Activated T-helper 2 cell treated with anti-CD3 and anti-CD28 coated beads, Interferon-gamma antibody, Interleukin-2, Interleukin-4, amounts not matched to agents 10 μg/mL and 5 μg/mL and 100 μg/mL, durations not matched to agents 14 hours and 24 hours and 36 hours (primary cell): ENCODE measurements at regions of chr15 and their contacts with region 1.

Region 1: DNA sequence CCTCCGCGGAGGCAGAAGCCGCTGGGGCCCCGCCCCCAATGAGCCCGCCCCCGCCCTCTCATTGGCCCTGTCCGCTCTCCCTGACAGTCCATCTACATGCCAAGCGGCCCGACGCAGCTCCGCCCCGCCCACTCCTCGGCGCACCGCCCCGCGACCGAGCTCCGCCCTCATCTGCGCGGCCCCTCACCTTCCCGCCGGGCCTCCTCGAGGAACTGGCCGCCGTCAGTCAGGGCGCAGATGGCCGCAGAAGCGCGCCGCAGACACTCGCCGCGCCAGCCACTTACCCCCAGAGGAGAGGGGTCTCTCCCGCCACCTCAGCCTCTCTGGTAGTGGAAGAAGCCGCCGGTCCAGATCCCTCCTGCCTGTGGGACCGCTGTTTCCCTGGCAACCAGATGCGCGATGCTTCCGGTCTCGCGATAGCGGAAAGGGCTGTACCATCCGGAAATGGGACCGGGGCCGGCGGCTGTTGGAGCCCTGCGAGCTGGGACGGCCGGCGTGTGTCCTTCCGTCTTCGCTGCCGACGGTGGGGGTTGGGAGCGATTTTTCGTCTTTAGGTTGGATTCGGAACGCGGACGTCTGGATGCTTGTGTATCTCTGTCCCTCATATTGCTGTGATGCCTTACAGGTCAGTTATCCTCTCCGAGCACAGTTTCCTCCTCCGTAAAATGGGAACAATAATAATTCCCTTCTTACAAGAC is at the start of gene FSIP1:
- DNase-seq: peak; percentile 95
- H3K4me3 Mint-ChIP-seq: peak within 1 kb of the TSS; percentile 81
- H3K27ac Mint-ChIP-seq: peak within 1 kb of the TSS; percentile 67
- H3K4me1 Mint-ChIP-seq: peaks cover 34% of the 10 kb centered on the region
- H3K27me3 Mint-ChIP-seq: peaks cover 6% of the 10 kb centered on the region
- total RNA-seq, gene FSIP1: 0.14 and 0.16 TPM in 2 replicates

Region 2: GRCh38 chr15:39874890-39875549 is 92.4 kb after region 1 on chr15:
- intact Hi-C with region 1: loop called (anchors 1 kb)
- DNase-seq: no peak
- H3K4me3 Mint-ChIP-seq: no peak overlapping the region
- H3K27ac Mint-ChIP-seq: no peak overlapping the region
- H3K4me1 Mint-ChIP-seq: peaks cover 12% of the 10 kb centered on the region
- H3K27me3 Mint-ChIP-seq: peaks cover 6% of the 10 kb centered on the region

Region 3: DNA sequence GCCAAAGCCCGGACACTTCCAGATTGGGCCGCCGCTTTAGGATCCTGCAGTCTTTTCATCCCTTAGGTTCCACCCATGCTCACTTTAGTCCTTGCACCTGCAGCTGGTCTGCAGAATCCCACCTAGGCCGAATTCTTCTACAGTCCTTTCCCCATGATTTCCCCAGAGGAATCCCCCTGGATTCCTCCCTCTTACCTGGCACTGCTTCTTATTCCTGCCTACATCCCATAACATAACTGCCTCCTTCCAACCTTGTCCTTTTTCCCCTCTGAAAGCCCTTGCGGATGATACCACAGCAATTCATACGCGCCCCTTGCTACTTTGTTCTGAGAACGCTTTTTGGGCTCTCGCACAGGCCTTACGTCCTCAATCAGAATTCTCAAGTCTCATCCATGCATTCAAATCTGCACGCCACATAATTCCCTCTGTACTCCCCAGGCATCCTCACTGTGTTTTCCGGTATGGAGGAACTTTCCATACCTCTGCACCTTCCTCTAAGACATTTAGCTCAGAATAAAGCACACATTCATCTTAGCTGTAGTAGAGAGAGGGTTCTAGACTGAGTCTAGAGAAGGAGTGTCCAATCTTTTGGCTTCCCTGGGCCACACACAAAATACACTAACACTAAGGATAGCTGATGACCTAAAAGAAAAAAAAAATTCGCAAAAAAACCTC is 151.9 kb after region 1 on chr15:
- intact Hi-C with region 1: loop called (anchors 5 kb)
- DNase-seq: no peak
- H3K4me3 Mint-ChIP-seq: peak overlapping the region; percentile 90
- H3K27ac Mint-ChIP-seq: peak overlapping the region; percentile 67
- H3K4me1 Mint-ChIP-seq: peaks cover 36% of the 10 kb centered on the region
- H3K27me3 Mint-ChIP-seq: peaks cover 1% of the 10 kb centered on the region

Region 4: GRCh38 chr15:39966521-39966920 is 183.9 kb after region 1 on chr15:
- intact Hi-C with region 1: loop called (anchors 5 kb)
- DNase-seq: no peak
- H3K4me3 Mint-ChIP-seq: no peak overlapping the region
- H3K27ac Mint-ChIP-seq: no peak overlapping the region
- H3K4me1 Mint-ChIP-seq: peaks cover 51% of the 10 kb centered on the region
- H3K27me3 Mint-ChIP-seq: no peaks in the 10 kb centered on the region

Region 5: GRCh38 chr15:40038638-40039543 is 256.3 kb after region 1 on chr15 and contains the start of gene SRP14:
- intact Hi-C with region 1: loop called (anchors 5 kb)
- DNase-seq: peak; percentile 87
- H3K4me3 Mint-ChIP-seq: peak within 1 kb of the TSS; percentile 91
- H3K27ac Mint-ChIP-seq: peak within 1 kb of the TSS; percentile 95
- H3K4me1 Mint-ChIP-seq: peaks cover 44% of the 10 kb centered on the region
- H3K27me3 Mint-ChIP-seq: no peaks in the 10 kb centered on the region
- total RNA-seq, gene SRP14: 160 and 167 TPM in 2 replicates

Region 6: DNA sequence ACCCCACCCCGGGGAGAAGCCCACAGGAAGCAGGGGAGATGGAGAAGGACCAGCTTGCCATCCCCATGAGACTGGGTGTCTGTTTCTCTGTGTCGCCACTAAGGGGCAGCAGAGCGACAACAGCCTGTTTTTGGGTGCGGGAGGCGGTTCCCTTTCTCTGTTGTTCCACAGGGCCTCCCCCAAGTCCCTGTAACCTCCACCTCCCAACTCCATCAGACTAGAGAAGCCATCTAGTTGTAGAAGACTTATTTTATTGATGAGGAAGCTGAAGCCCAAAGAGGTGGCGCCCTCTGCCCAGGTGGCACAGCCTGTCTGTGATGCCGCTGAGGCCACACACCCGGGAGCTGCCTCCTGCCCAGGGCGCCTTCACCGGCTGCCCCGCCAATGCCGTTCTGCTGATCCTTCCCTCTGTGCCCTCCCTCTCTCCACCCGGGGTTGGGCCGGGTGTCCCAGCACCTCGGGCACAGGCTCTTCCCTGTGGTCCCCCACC is 562.1 kb after region 1 on chr15:
- intact Hi-C with region 1: no loop called
- DNase-seq: peak; percentile 64
- H3K4me3 Mint-ChIP-seq: no peak overlapping the region
- H3K27ac Mint-ChIP-seq: no peak overlapping the region
- H3K4me1 Mint-ChIP-seq: no peaks in the 10 kb centered on the region
- H3K27me3 Mint-ChIP-seq: no peaks in the 10 kb centered on the region